HepG2 (cell line): ENCODE measurements at regions of chr4 and their contacts with region 1.

Region 1: GRCh38 chr4:37977471-37978247 is 17.5 kb downstream of the PTTG2 start:
- DNase-seq: peak; percentile 23
- ATAC-seq: peak; percentile 78
- H3K4me3 ChIP-seq: peak overlapping the region; percentile 61 to 81 (median 80); a peak in 5 of 6 replicates
- H3K27ac ChIP-seq: peak overlapping the region; percentile 67
- H3K4me1 ChIP-seq: peaks cover 54% of the 10 kb centered on the region
- H3K27me3 ChIP-seq: no peaks in the 10 kb centered on the region
- CTCF ChIP-seq: peak; percentile 70
- EP300 ChIP-seq: no peak
- POLR2A ChIP-seq: no peak
- RAD21 ChIP-seq: peak; percentile 56

Region 2: DNA sequence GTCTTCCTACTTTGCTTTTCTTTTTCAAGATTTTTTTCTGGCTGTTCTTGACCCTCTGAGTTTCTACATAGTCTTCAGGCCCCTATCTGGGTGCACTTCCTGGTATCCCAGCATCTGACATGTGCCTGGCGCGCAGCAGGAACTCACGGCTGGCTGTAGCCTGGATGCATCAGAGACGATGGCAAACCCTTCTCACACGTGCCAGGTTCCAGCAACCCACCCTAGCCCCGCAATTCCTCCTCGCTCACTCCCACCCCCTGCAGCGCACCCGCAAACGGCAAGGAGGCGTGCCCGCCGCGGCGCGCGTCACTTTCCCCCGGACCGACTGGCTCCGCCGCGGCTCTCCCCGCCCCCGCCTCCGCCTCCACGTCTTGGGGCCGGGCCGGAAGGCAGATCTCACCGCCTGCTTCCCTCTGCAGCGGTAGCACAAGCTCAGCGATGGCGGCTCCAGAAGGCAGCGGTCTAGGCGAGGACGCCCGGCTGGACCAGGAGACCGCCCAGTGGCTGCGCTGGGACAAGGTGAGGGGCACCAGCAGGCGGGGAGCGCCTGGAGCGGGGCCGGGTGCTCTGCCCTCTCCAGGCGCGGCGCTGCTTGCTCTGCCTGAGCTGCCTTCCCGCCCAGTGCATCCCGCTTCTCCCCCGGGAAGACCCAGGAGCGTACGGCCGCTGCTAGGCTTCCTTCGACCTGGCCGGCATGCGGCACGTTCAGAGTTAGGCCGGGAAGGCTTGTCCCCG is 151.2 kb before region 1 on chr4 and contains the start of gene PGM2:
- CTCF ChIA-PET with region 1: no interaction called
- POLR2A ChIA-PET with region 1: no interaction called
- in situ Hi-C with region 1: no loop called
- intact Hi-C with region 1: loop called (anchors 2 kb)
- DNase-seq: peak; percentile 61
- ATAC-seq: peak; percentile 94
- H3K4me3 ChIP-seq: peak within 1 kb of the TSS; percentile 63 to 89 (median 71)
- H3K27ac ChIP-seq: peak within 1 kb of the TSS; percentile 39
- H3K4me1 ChIP-seq: peaks cover 31% of the 10 kb centered on the region
- H3K27me3 ChIP-seq: no peaks in the 10 kb centered on the region
- CTCF ChIP-seq: peak; percentile 34
- EP300 ChIP-seq: no peak
- POLR2A ChIP-seq: peak; percentile 75 to 95; a peak in 3 of 4 replicates
- RAD21 ChIP-seq: 0 out of 2 replicates have a peak, but pooled peaks have one; percentile 27
- total RNA-seq, gene PGM2: 36.9 and 64.5 TPM in 2 replicates

Region 3: DNA sequence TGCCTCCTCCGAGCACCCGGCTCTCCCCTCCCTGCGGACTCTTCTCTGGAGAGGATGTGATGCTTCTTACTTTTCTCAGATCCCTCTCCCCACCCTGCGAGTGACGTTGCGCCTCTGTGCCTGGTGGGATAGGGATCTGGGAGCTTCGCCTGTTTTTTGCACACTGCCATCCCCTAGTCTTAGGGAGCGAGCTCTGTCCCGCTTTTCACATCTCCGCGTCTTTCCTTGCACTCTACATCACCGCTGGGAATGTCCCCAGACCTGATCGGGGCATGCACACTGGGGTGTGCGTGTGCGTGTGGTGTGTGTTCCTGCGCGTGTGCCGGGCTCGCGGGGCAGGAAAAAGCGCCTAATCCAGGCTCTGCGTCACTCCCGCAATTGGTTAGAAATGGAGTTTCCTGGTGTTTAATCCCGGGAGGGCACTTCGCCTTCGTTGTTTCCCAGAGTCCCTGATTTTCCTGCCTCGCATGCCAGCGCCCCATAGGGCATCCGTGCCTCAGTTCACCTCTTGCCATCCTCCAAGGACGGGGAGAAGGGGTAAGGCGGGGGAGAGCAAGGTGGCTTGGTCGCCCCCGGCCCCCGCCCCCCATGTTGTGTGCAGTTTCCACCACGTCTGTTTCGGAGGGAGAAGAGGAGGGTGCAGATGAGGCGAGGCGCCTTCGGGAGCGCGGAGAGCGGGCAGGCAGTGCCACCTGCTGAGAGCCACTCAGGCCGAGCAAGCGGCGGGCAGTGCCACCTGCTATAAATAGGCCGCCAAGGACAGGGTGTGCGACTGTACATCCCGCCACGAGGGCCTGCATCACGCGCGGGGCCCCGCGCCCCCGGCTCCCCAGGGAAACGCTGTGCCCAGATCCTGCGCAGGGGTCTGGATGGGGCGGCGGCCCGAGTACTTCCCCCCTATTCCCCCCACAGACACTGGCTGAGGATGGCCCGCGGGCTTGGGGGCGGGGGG is 87.5 kb before region 1 on chr4:
- CTCF ChIA-PET with region 1: no interaction called
- POLR2A ChIA-PET with region 1: no interaction called
- in situ Hi-C with region 1: no loop called
- intact Hi-C with region 1: loop called (anchors 10 kb)
- DNase-seq: no peak
- ATAC-seq: no peak; the same call in 2 of the 3 replicates
- H3K4me3 ChIP-seq: peak overlapping the region; percentile 54 to 68 (median 55); a peak in 2 of 6 replicates
- H3K27ac ChIP-seq: no peak overlapping the region
- H3K4me1 ChIP-seq: peaks cover 7% of the 10 kb centered on the region; the same call in 1 of the 2 replicates
- H3K27me3 ChIP-seq: peaks cover 1 to 27% of the 10 kb centered on the region in 2 experiments; a peak in 2 of 5 replicates
- CTCF ChIP-seq: no peak
- EP300 ChIP-seq: no peak
- POLR2A ChIP-seq: no peak
- RAD21 ChIP-seq: no peak